ENCODE measurements at regions of chr2 and their contacts with region 1.

Region 1: DNA sequence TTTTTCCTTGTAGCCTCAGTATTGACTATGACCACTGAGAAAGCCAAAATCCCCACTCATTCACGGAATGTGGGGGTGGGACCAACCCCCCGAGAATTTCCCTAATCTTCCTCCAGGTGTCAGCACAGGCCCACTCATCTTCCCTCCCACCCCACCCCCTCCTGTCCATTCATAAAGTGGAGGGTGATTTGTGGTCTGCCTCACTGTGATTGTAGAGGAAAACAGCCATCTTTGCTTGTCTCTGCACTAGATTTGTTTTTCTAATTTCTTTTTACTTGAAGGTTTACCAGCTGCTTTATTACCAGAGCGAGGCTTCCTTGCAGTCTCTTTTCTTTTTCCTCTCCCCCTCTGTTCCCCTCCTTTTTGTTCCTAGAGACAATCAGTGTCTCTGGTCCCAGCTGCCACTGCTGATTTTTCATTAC is 171.8 kb downstream of the ICOS start:
- DNase-seq: peak; percentile 73
- H3K4me3 ChIP-seq: no peak overlapping the region
- H3K27ac ChIP-seq: peak overlapping the region; percentile 74
- H3K4me1 ChIP-seq: peaks cover 47% of the 10 kb centered on the region
- H3K27me3 ChIP-seq: no peaks in the 10 kb centered on the region
- CTCF ChIP-seq: peak; percentile 25 to 59
- POLR2A ChIP-seq: no peak

Region 2: DNA sequence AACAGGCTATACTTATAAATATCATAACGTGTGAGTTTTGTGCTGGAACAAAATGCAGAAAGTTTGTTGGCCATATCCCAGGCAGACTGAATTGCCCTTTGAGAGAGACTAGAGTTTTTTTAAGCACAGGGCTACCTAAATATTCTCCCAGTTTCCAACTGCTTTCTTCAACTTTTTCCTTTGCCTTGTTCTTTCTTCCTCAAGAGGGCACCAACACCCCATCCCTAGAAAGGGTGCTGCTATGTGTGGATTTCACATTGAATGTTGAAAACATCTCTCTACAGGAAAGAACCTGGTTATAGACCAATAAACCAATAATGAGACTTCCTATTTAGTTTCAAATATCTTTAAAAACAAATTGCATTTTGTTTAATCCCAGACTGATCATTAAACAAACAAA is 83.8 kb before region 1 on chr2:
- CTCF ChIA-PET with region 1: interaction called, 8 read pairs
- POLR2A ChIA-PET with region 1: no interaction called
- dilution Hi-C with region 1: no loop called
- intact Hi-C with region 1: loop called (anchors 1 kb)
- DNase-seq: peak; percentile 81
- H3K4me3 ChIP-seq: no peak overlapping the region
- H3K27ac ChIP-seq: no peak overlapping the region
- H3K4me1 ChIP-seq: peaks cover 13% of the 10 kb centered on the region
- H3K27me3 ChIP-seq: no peaks in the 10 kb centered on the region
- CTCF ChIP-seq: peak; percentile 54 to 59
- POLR2A ChIP-seq: no peak

Region 3: GRCh38 chr2:204122447-204122846 is 14.1 kb after region 1 on chr2:
- CTCF ChIA-PET with region 1: no interaction called
- POLR2A ChIA-PET with region 1: no interaction called
- dilution Hi-C with region 1: no loop called
- intact Hi-C with region 1: no loop called
- DNase-seq: no peak
- H3K4me3 ChIP-seq: no peak overlapping the region
- H3K27ac ChIP-seq: no peak overlapping the region
- H3K4me1 ChIP-seq: peaks cover 2% of the 10 kb centered on the region
- H3K27me3 ChIP-seq: no peaks in the 10 kb centered on the region
- CTCF ChIP-seq: no peak
- POLR2A ChIP-seq: no peak

Region 4: GRCh38 chr2:204260162-204260877 is 152.0 kb after region 1 on chr2:
- CTCF ChIA-PET with region 1: interaction called, 9 read pairs
- POLR2A ChIA-PET with region 1: no interaction called
- dilution Hi-C with region 1: no loop called
- intact Hi-C with region 1: loop called (anchors 1 kb)
- DNase-seq: peak; percentile 86
- H3K4me3 ChIP-seq: no peak overlapping the region
- H3K27ac ChIP-seq: no peak overlapping the region
- H3K4me1 ChIP-seq: peaks cover 6% of the 10 kb centered on the region
- H3K27me3 ChIP-seq: peaks cover 0 to 2% of the 10 kb centered on the region in 2 experiments
- CTCF ChIP-seq: peak; percentile 63 to 72
- POLR2A ChIP-seq: no peak

Region 5: DNA sequence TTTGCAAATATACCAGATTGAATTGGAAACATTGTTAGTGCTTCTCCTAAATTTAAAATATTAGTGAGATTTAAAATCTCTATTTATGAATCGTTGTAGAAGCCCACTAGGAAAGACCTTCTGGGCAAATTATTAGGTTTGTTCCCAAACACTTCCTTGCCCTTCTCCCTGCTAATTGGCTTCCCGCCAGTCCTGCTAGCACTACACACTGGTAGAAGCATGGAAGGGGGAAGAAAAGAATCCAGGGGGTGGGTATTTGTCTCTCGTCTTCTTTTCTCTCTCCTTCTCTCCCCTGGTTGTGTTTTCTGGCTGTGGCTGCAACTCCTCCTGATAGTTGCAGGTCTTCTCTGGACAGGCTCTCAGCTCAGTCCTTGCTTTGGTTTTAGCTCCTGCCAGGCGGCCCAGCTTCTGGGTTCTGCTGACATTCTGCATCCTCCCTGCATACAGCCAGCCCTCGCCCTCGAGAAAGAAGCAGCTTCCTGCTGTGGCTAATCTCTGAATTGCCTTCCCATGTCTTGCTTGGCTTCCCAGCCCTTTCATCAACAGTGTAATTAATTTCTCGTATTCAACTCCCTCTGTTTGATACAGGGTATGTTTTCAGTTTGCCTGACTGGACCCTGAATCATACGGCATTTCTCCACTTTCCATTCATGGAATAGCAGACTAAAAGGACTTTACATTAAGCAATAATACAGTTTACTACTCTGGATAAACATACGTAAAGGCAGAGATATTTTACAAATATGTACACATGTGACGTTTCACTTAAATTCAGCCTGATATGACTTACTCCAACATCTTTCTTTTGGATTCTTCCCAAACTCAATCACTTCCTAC is 430.1 kb after region 1 on chr2:
- CTCF ChIA-PET with region 1: no interaction called
- POLR2A ChIA-PET with region 1: no interaction called
- dilution Hi-C with region 1: no loop called
- intact Hi-C with region 1: loop called (anchors 1 kb)
- DNase-seq: peak; percentile 93
- H3K4me3 ChIP-seq: peak overlapping the region in 2 of 3 experiments; percentile 6 to 51
- H3K27ac ChIP-seq: peak overlapping the region; percentile 81
- H3K4me1 ChIP-seq: peaks cover 32% of the 10 kb centered on the region
- H3K27me3 ChIP-seq: no peaks in the 10 kb centered on the region
- CTCF ChIP-seq: no peak
- POLR2A ChIP-seq: no peak

Region 6: GRCh38 chr2:205024822-205025518 is 916.6 kb after region 1 on chr2:
- CTCF ChIA-PET with region 1: no interaction called
- POLR2A ChIA-PET with region 1: no interaction called
- dilution Hi-C with region 1: no loop called
- intact Hi-C with region 1: loop called (anchors 10 kb)
- DNase-seq: peak; percentile 96
- H3K4me3 ChIP-seq: peak overlapping the region in 1 of 3 experiments; percentile 1
- H3K27ac ChIP-seq: peak overlapping the region; percentile 44
- H3K4me1 ChIP-seq: peaks cover 13% of the 10 kb centered on the region
- H3K27me3 ChIP-seq: no peaks in the 10 kb centered on the region
- CTCF ChIP-seq: no peak
- POLR2A ChIP-seq: no peak

Region 7: GRCh38 chr2:205766779-205767359 is 1658.5 kb after region 1 on chr2:
- CTCF ChIA-PET with region 1: no interaction called
- POLR2A ChIA-PET with region 1: no interaction called
- dilution Hi-C with region 1: no loop called
- intact Hi-C with region 1: loop called (anchors 5 kb)
- DNase-seq: peak; percentile 66
- H3K4me3 ChIP-seq: no peak overlapping the region
- H3K27ac ChIP-seq: no peak overlapping the region
- H3K4me1 ChIP-seq: peaks cover 28% of the 10 kb centered on the region
- H3K27me3 ChIP-seq: no peaks in the 10 kb centered on the region
- CTCF ChIP-seq: peak; percentile 79 to 86
- POLR2A ChIP-seq: no peak

Region 8: DNA sequence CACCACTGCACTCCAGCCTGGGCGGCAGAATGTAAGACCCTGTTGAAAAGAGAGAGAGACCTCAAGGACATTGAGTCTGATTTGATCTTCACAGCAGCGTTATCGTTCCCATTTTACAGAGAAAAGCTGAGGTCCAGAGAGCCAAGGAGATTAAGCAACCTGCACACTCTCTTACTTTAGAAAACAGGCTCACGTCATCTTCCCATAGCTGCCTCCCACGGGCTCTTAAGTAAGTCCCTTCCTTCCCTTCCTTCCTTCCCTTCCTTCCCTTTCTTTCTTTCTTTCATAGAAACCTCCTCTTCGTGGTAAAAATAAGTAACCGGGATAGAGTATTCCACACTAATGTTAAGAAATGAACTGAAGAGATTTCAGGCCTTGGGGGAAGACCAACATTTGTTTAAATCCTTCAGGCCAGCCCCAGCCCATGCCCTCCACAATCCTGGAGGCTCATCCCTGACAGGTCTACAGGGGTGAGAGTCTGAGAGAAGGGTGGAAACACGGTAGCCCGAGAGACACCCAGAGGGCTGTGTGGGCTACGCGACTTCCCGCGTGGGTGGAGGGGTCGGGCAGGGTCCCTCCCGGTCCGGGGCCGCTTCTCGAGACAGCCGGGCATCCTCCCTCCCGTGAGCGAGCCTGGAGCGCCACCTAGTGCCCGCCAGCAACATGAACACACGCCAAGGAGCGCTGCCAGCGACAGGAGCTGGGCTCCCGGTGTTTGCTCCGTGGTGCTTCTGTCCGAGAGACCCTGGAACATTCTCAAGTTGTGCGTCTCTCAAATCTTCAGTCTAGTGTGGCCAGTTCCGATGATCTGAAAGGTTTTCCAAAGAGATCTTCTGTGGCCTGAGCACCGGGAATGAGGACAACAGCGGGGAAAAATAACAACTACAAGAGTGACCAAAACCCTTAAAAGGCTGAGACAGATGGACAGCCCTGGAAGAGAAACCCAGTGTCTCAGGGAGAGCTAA is 1817.3 kb after region 1 on chr2:
- CTCF ChIA-PET with region 1: interaction called, 20 read pairs
- POLR2A ChIA-PET with region 1: interaction called, 3 read pairs
- dilution Hi-C with region 1: no loop called
- intact Hi-C with region 1: loop called (anchors 1 kb)
- DNase-seq: peak; percentile 79
- H3K4me3 ChIP-seq: peak overlapping the region in 1 of 3 experiments; percentile 47
- H3K27ac ChIP-seq: no peak overlapping the region
- H3K4me1 ChIP-seq: peaks cover 17% of the 10 kb centered on the region
- H3K27me3 ChIP-seq: peaks cover 5 to 6% of the 10 kb centered on the region in 2 experiments
- CTCF ChIP-seq: peak; percentile 92 to 96
- POLR2A ChIP-seq: no peak

Measured in endothelial cell of umbilical vein (primary cell).